ENCODE measurements at regions of chr2 and their contacts with region 1.

Region 1: DNA sequence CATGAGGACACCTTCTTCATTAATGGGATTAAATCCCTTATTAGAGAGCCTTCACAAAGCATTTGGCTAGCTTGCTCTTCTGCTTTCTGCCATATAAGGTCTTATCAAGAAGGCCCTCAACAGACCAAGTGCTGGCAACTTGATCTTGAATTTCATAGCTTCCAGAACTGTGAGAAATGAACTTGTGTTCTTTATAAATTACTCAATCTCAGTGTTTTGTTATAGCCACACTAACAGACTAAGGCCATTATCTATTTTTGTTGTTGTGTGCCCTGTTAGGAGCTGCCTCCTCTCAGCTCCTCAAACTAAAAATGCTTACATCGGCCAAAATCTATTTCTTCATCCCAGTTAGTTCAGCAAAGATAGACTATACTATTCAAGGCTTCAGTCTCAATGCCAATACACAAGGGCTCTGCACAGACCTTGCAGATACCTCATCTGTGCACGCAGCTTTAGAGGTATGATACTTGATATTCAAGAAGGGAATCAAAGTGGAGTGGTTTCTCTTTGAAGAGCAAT is 182.9 kb downstream of the GPD2 start:
- DNase-seq: no peak

Region 2: GRCh38 chr2:156635646-156636045 is 16.6 kb after region 1 on chr2:
- intact Hi-C with region 1: no loop called
- DNase-seq: no peak

Region 3: DNA sequence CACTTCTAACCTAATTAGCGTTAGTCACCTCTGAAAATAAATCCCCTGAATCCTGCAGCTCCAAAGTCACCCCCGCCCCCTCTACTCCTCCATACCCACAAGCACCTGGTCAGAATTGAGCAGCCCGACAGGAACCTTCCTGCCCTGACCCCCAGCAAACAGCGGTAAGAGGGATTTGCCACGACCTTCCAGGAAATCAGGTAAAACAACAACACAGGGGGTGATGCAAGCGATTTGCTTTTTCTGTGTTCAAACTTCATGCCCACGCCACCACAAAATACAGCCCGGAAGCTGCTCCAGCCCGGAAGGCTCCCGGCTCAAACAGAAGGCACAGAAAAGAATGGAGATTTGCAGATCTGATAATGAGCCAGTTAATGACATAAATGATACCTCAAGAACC is 184.2 kb after region 1 on chr2:
- intact Hi-C with region 1: loop called in 1 of 2 experiments (anchors 5 kb)
- DNase-seq: no peak

Measured in posterior vena cava (tissue), 2 donors.